Left cardiac atrium (tissue), 4 donors: ENCODE measurements at regions of chr5 and their contacts with region 1.

Region 1: GRCh38 chr5:159286420-159287035 is 23.4 kb downstream of the UBLCP1 start:
- DNase-seq: no peak
- ATAC-seq: peak in 1 of 2 donors; percentile 25

Region 2: GRCh38 chr5:159412284-159413046 is 125.9 kb after region 1 on chr5:
- intact Hi-C with region 1: loop called in 1 of 2 experiments (anchors 10 kb)
- DNase-seq: no peak
- ATAC-seq: peak in 1 of 2 donors; percentile 30